Cardiac septum (tissue), 1 donor: ENCODE measurements at regions of chr5 and their contacts with region 1.

Region 1: DNA sequence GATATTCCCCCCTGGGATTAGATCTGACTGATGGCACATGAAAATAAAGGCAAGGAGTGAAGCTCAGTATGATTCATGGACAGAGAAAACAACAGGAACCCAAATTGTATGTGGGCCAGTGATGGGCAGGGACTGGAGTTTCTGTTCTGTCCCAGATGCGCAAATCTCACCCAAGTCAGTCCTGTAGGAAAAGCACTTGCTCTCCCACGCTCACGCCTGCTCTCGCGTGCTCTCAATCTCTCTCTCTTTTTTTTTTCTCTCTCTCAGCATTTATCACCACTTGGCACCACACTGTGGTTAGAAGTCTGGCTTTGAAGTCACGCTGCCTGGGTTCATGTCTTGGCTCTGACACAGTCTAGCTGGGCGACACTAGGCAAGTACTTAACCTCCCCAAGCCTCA is 106.5 kb upstream of the LRRTM2 start:
- DNase-seq: no peak

Region 2: DNA sequence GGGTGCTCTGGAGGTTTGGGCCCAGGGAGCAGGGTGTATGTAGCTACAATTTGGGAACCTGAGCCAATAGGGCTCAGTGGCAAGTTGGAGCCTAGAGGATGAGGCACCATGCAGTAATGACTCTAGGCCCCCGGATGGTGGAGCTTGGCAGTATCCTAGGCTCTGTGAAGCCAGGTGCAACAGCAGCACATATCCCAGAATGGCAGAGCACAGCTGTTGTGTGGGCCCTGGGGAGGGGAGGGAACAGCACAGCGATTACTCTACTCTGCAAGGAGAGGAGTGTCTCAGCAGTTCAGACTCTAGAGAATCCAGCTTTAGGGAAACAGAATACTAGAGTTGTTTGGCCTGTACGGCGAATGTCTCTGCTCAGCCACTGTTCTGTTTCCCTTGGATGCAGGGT is 162.5 kb before region 1 on chr5:
- intact Hi-C with region 1: no loop called
- DNase-seq: no peak

Region 3: DNA sequence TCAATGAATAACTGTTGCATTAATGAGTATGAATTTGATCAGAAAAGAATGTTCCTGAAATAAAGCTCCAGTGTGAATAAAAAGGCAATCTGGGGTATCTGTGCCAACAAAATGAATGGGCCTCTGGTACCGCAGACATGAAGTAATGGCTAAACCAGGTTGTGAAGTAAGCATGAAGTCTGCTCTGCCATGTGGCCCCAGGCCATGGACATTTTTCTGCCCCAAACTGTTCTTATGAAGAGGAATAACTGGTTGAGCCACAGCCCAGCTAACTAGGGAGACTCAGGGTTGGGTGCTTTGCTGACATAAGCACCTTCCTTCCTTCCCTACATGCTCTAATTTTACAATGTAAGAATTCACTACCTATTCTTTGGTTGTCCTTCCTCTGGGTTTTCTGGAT is 40.9 kb after region 1 on chr5:
- intact Hi-C with region 1: loop called (anchors 5 kb)
- DNase-seq: no peak